Mammary epithelial cell (primary cell): ENCODE measurements at regions of chr9 and their contacts with region 1.

Region 1: DNA sequence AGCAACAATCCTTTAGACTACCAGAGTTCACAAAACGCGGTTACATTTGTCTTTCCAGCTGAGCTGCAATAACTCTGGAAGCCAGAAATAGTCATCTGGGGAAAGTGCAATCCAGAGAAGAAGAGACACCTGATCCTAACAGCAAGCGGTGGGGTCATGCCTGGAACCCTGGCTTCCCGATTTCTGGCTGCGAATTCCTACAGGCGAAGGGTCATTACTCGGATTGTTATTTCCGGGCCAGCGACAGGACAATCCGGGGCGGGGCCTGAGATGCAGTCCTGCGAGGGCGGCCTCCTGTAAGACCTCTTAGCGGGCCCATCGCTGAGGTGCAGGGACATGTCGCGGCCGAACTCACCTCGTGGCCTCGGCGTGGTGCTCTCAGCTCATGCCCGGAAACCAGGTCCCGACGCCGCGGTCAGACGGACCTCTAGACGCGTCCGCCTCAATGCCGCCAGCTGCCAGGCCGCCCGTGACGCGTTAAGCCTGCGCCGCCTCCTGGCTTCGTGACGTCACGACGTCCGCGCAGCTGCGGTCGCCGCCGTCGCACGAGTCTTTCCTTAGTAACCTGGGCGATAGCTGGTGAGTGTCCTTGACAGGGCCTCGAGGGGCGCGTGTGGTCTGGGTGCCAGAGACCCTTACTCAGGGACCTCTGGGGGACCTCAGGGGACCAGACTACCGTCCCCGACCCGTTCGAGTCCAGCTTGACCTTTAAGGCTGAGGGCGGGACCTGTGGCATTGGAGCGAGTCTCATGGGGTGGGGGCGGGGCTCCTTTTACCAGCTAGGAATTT is at the starts of genes MRRF and RBM18:
- DNase-seq: peak; percentile 91
- H3K4me3 ChIP-seq: peak within 1 kb of the TSS; percentile 72 to 80 (median 77)
- H3K27ac ChIP-seq: peak within 1 kb of the TSS; percentile 95
- H3K4me1 ChIP-seq: peaks cover 28% of the 10 kb centered on the region
- H3K27me3 ChIP-seq: no peaks in the 10 kb centered on the region
- CTCF ChIP-seq: no peak
- total RNA-seq, gene MRRF: 43.0 to 52.0 TPM
- total RNA-seq, gene RBM18: 14.3 to 39.7 TPM

Region 2: DNA sequence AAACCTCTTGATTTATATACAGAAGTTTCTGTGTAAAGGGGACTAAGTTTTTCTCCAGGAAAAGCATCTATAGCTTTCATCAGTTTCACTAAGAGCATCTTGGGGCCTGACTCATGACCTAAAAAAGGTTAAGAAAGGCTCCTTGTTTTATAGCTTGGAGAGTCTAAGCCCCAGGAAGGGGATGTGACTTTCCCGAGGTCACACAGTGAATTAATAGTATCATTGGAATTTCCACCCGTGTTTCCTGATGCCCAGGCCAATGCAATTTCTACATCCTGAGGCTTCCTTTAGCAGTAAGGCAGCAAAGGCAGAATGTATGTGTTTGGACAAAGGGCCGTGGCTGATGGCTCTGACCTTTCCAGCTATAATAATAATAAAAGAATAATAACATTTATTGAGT is 96.2 kb before region 1 on chr9:
- CTCF ChIA-PET with region 1: no interaction called
- dilution Hi-C with region 1: no loop called
- in situ Hi-C with region 1: no loop called
- intact Hi-C with region 1: no loop called
- DNase-seq: peak; percentile 34
- H3K4me3 ChIP-seq: no peak overlapping the region
- H3K27ac ChIP-seq: no peak overlapping the region
- H3K4me1 ChIP-seq: no peaks in the 10 kb centered on the region
- H3K27me3 ChIP-seq: no peaks in the 10 kb centered on the region
- CTCF ChIP-seq: no peak

Region 3: DNA sequence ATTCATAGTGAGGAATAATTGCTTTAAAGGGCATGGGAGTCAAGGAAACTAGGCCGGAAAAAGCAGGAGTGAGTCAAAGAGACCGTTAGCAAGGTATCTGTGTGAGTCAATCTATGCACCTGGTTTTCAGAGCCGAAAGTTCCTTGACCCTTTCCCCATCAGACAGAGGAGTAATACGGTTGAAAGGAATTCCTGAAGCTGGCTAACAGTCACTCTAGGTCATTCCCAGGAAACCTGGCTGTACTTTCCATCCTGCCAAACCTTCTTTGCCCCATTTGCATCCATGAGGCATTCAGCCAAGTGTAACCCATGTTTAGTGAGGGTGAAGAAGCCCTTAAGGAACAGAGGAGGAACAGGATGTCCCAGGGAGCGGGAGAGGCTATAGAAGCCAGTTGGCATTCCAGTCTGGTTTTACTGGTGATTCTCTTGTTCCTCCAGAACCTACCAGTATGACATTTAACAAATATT is 16.1 kb before region 1 on chr9:
- CTCF ChIA-PET with region 1: no interaction called
- dilution Hi-C with region 1: no loop called
- in situ Hi-C with region 1: no loop called
- intact Hi-C with region 1: loop called (anchors 2 kb)
- DNase-seq: peak; percentile 99
- H3K4me3 ChIP-seq: no peak overlapping the region
- H3K27ac ChIP-seq: peak overlapping the region; percentile 96
- H3K4me1 ChIP-seq: peaks cover 11% of the 10 kb centered on the region
- H3K27me3 ChIP-seq: no peaks in the 10 kb centered on the region
- CTCF ChIP-seq: no peak

Region 4: GRCh38 chr9:122346478-122347362 is 82.2 kb after region 1 on chr9:
- CTCF ChIA-PET with region 1: no interaction called
- dilution Hi-C with region 1: no loop called
- in situ Hi-C with region 1: no loop called
- intact Hi-C with region 1: no loop called
- DNase-seq: no peak
- H3K4me3 ChIP-seq: peak overlapping the region; percentile 46 to 66 (median 48)
- H3K27ac ChIP-seq: no peak overlapping the region
- H3K4me1 ChIP-seq: peaks cover 13% of the 10 kb centered on the region
- H3K27me3 ChIP-seq: no peaks in the 10 kb centered on the region
- CTCF ChIP-seq: no peak

Region 5: DNA sequence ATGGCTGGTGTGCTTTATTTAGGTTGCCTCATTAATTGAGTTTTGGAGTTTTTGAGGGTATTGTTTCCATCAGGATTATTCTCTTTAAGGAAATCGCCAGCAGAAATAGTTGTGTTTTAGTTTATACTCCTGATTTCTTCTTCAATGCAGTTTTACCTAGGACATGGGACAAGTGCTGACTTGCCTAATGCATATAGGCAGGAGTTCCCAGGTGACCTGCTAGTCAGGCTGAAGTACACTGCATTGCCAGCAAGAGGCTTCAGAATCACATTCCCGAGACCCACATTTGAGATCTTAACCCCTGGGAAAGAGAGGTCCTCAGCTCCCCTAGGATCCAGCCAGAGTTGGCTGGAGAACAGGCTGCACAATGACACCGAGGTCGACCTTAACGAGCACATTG is 286.8 kb after region 1 on chr9:
- CTCF ChIA-PET with region 1: no interaction called
- dilution Hi-C with region 1: no loop called
- in situ Hi-C with region 1: no loop called
- intact Hi-C with region 1: no loop called
- DNase-seq: peak; percentile 60
- H3K4me3 ChIP-seq: no peak overlapping the region
- H3K27ac ChIP-seq: no peak overlapping the region
- H3K4me1 ChIP-seq: peaks cover 8% of the 10 kb centered on the region
- H3K27me3 ChIP-seq: no peaks in the 10 kb centered on the region
- CTCF ChIP-seq: no peak